Natural killer cell (primary cell): ENCODE measurements at regions of chr20 and their contacts with region 1.

Region 1: GRCh38 chr20:37178839-37179670 is at the starts of genes MROH8 and RPN2:
- DNase-seq: peak; percentile 93 to 96
- ATAC-seq: peak; percentile 87 to 97 (median 94)
- H3K4me3 ChIP-seq: peak within 1 kb of the TSS; percentile 94
- H3K4me3 Mint-ChIP-seq: peak within 1 kb of the TSS; percentile 99
- H3K27ac ChIP-seq: peak within 1 kb of the TSS; percentile 97
- H3K27ac Mint-ChIP-seq: peak within 1 kb of the TSS; percentile 97 to 99
- H3K4me1 ChIP-seq: peaks cover 29% of the 10 kb centered on the region
- H3K4me1 Mint-ChIP-seq: peaks cover 40 to 42% of the 10 kb centered on the region in 2 donors
- H3K27me3 ChIP-seq: no peaks in the 10 kb centered on the region
- H3K27me3 Mint-ChIP-seq: peaks cover 0 to 2% of the 10 kb centered on the region in 2 donors
- CTCF ChIP-seq: no peak
- total RNA-seq, gene MROH8: 1.7 to 3.2 (median 2.3) TPM
- total RNA-seq, gene RPN2: 124 to 136 (median 125) TPM

Region 2: GRCh38 chr20:37202267-37202943 is 23.4 kb after region 1 on chr20:
- intact Hi-C with region 1: no loop called
- DNase-seq: peak in 1 of 2 donors; percentile 59
- ATAC-seq: peak in 1 of 3 donors; percentile 59
- H3K4me3 ChIP-seq: no peak overlapping the region
- H3K4me3 Mint-ChIP-seq: no peak overlapping the region
- H3K27ac ChIP-seq: no peak overlapping the region
- H3K27ac Mint-ChIP-seq: no peak overlapping the region
- H3K4me1 ChIP-seq: no peaks in the 10 kb centered on the region
- H3K4me1 Mint-ChIP-seq: no peaks in the 10 kb centered on the region
- H3K27me3 ChIP-seq: no peaks in the 10 kb centered on the region
- H3K27me3 Mint-ChIP-seq: no peaks in the 10 kb centered on the region
- CTCF ChIP-seq: peak; percentile 68

Region 3: DNA sequence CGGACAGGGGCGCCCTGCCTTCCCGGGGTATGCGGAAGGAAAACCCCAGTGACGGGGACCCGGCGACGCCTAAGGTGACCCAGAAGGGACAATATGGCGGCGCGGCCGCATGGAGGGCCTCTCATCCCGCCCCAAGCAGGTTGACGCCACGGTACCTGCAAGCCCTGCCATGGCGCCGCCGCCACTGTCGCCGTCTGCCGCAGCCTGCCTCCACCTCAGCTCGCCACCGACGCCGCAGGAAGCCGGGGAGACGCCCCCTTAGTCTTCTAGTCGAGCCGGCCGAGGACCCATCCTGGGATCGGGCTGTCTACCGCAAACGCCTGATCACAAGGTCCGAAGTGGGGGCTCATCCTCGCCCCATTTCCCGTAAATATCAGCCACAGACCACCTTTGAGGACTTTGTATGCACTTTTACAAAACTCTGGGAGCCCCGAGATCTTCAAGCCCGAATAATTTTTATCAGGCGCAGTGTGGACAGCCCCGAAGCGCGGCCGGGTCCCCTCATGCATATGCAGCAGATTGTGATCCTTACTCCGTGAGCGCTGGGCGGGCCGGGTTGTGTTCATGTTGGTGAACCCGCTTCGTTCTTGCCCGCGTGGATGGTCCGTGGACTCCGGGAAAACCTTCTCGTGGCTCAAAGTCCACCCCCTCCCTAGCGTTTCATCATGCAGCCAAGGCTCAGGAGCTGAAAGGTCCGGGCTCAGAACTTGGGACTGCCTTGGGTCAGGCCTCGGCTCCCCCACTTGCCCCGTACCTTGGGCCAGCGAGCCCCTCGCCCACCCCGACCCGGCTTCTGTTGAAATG is 348.8 kb after region 1 on chr20 and contains the start of gene BLCAP:
- intact Hi-C with region 1: loop called (anchors 5 kb)
- DNase-seq: peak; percentile 90 to 96
- ATAC-seq: peak; percentile 86 to 95 (median 88)
- H3K4me3 ChIP-seq: peak within 1 kb of the TSS; percentile 88
- H3K4me3 Mint-ChIP-seq: peak within 1 kb of the TSS; percentile 96
- H3K27ac ChIP-seq: peak within 1 kb of the TSS; percentile 90
- H3K27ac Mint-ChIP-seq: peak within 1 kb of the TSS; percentile 99
- H3K4me1 ChIP-seq: peaks cover 40% of the 10 kb centered on the region
- H3K4me1 Mint-ChIP-seq: peaks cover 52 to 66% of the 10 kb centered on the region in 2 donors
- H3K27me3 ChIP-seq: no peaks in the 10 kb centered on the region
- H3K27me3 Mint-ChIP-seq: peaks cover 0 to 3% of the 10 kb centered on the region in 2 donors
- CTCF ChIP-seq: no peak
- total RNA-seq, gene BLCAP: 60.4 to 80.1 (median 77.9) TPM